Activated CD4-positive, alpha-beta T cell treated with anti-CD3 and anti-CD28 coated beads for 36 hours (primary cell): ENCODE measurements at regions of chr12 and their contacts with region 1.

Region 1: GRCh38 chr12:110449799-110450497 is at the start of gene ARPC3:
- DNase-seq: peak; percentile 98
- ATAC-seq: peak; percentile 99
- H3K4me3 Mint-ChIP-seq: peak within 1 kb of the TSS; percentile 97
- H3K27ac Mint-ChIP-seq: peak within 1 kb of the TSS; percentile 100
- H3K4me1 Mint-ChIP-seq: peaks cover 38% of the 10 kb centered on the region
- H3K27me3 Mint-ChIP-seq: no peaks in the 10 kb centered on the region
- total RNA-seq, gene ARPC3: 244 to 422 TPM

Region 2: DNA sequence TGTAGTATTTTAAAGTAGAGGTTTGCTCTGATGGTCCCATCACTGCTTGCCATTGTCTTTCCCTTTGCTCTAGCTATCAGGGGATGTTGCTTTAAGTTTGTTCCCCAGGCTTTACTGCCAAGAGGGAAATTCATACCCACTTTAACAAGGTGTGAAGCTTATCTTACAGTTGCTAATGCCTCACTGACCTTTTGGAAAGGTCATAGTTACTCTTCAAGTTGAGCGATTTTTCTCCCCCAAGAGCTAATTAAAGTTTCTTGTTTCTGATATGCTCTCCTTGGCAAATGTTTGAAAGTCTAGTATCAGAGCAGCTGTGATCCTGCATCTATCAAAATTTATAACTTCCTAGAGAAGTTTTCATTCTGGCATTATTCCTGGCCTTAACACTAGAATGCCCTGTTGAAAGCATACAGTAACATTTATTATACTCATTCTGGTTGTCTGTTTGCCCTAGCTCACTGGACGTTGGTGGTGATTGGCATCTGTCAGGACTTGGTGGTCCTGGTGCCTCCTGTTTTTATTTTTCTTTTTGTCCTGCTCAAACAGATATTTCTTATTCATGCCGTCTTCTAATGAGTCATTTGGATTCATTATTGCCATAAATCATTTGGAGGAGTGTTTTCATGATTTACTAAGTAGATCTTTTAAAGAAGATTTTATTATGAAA is 160.8 kb before region 1 on chr12:
- CTCF ChIA-PET with region 1: no interaction called
- POLR2A ChIA-PET with region 1: interaction called, 10 read pairs
- intact Hi-C with region 1: no loop called
- DNase-seq: no peak
- ATAC-seq: no peak
- H3K4me3 Mint-ChIP-seq: no peak overlapping the region
- H3K27ac Mint-ChIP-seq: no peak overlapping the region
- H3K4me1 Mint-ChIP-seq: peaks cover 57% of the 10 kb centered on the region
- H3K27me3 Mint-ChIP-seq: no peaks in the 10 kb centered on the region

Region 3: GRCh38 chr12:110403146-110403975 is 46.6 kb before region 1 on chr12 and contains the start of gene ANAPC7:
- CTCF ChIA-PET with region 1: no interaction called
- POLR2A ChIA-PET with region 1: interaction called, 12 read pairs
- intact Hi-C with region 1: loop called (anchors 1 to 5 kb)
- DNase-seq: peak; percentile 93
- ATAC-seq: peak; percentile 94
- H3K4me3 Mint-ChIP-seq: peak within 1 kb of the TSS; percentile 88
- H3K27ac Mint-ChIP-seq: peak within 1 kb of the TSS; percentile 99
- H3K4me1 Mint-ChIP-seq: peaks cover 21% of the 10 kb centered on the region
- H3K27me3 Mint-ChIP-seq: no peaks in the 10 kb centered on the region
- total RNA-seq, gene ANAPC7: 52.6 to 63.6 TPM

Region 4: GRCh38 chr12:110508071-110508586 is 58.2 kb after region 1 on chr12:
- CTCF ChIA-PET with region 1: interaction called, 8 read pairs
- POLR2A ChIA-PET with region 1: no interaction called
- intact Hi-C with region 1: loop called in 1 of 2 experiments (anchors 1 kb)
- DNase-seq: no peak
- ATAC-seq: no peak
- H3K4me3 Mint-ChIP-seq: no peak overlapping the region
- H3K27ac Mint-ChIP-seq: no peak overlapping the region
- H3K4me1 Mint-ChIP-seq: no peaks in the 10 kb centered on the region
- H3K27me3 Mint-ChIP-seq: no peaks in the 10 kb centered on the region

Region 5: DNA sequence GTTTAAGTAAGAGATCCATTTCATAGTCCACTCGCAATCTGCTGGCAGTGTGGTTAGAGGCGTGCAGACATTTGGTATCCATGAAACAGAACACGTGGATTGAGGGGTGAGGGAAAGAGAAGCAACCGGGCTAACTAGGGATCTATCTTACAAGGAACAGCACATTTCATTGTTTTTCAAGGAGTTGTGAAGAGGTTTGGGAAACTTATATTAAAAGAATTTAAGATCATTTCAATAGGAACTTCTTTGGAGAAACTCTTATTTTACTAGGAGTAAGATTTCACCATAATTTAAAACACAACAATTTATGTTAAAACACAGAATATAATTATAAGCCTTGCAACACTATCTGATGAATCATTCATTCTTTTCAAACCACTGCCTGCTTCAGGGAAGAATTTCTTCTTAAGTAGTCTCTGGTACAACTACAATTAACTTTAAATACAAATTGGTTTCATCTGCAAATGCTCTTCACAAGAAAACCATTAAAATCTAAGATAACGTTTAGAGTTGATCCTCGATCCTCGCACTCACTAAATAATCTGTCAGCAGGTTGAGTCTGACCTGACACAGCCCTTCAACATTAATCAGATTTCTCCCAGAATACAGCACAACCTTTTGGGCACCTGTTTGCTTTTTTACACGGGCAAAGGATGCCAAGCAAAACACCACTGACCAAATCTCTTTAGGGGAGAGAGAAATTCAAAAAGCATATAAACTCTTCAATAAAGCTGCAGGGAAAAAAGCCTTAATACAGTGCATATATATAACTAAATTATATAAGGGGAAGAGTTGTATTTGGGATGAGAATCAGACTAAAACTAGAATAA is 105.8 kb after region 1 on chr12:
- CTCF ChIA-PET with region 1: interaction called, 4 read pairs
- POLR2A ChIA-PET with region 1: no interaction called
- intact Hi-C with region 1: loop called in 1 of 2 experiments (anchors 2 kb)
- DNase-seq: no peak
- ATAC-seq: no peak
- H3K4me3 Mint-ChIP-seq: no peak overlapping the region
- H3K27ac Mint-ChIP-seq: peak overlapping the region; percentile 29
- H3K4me1 Mint-ChIP-seq: peaks cover 56% of the 10 kb centered on the region
- H3K27me3 Mint-ChIP-seq: no peaks in the 10 kb centered on the region

Region 6: GRCh38 chr12:110613771-110614684 is 164.1 kb after region 1 on chr12 and contains the start of gene TCTN1:
- CTCF ChIA-PET with region 1: interaction called, 16 read pairs
- POLR2A ChIA-PET with region 1: no interaction called
- intact Hi-C with region 1: loop called in 1 of 2 experiments (anchors 1 kb)
- DNase-seq: peak; percentile 99
- ATAC-seq: peak; percentile 99
- H3K4me3 Mint-ChIP-seq: peak within 1 kb of the TSS; percentile 78
- H3K27ac Mint-ChIP-seq: peak within 1 kb of the TSS; percentile 67
- H3K4me1 Mint-ChIP-seq: peaks cover 12% of the 10 kb centered on the region
- H3K27me3 Mint-ChIP-seq: no peaks in the 10 kb centered on the region
- total RNA-seq, gene TCTN1: 7.2 to 7.3 TPM

Region 7: DNA sequence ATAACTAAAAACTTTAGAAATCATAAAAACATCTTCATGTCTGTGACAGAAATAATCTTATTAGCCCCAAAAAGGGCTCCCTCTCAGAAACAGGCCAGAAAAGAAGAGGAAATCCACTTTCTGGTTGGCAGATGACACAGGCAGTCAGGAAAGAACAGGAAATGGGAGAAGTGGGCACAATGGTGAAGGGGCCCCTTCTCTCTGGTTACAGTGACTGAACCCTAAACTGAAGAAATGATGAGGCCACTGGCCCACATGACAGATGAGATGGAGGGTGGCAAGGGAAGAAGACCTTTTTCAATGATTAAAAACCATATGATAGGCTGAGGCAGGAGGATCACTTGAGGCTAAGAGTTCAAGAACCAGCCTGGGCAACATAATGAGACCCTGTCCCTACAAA is 185.1 kb after region 1 on chr12:
- CTCF ChIA-PET with region 1: no interaction called
- POLR2A ChIA-PET with region 1: no interaction called
- intact Hi-C with region 1: no loop called
- DNase-seq: no peak
- ATAC-seq: peak; percentile 39
- H3K4me3 Mint-ChIP-seq: no peak overlapping the region
- H3K27ac Mint-ChIP-seq: no peak overlapping the region
- H3K4me1 Mint-ChIP-seq: peaks cover 19% of the 10 kb centered on the region
- H3K27me3 Mint-ChIP-seq: no peaks in the 10 kb centered on the region

Region 8: DNA sequence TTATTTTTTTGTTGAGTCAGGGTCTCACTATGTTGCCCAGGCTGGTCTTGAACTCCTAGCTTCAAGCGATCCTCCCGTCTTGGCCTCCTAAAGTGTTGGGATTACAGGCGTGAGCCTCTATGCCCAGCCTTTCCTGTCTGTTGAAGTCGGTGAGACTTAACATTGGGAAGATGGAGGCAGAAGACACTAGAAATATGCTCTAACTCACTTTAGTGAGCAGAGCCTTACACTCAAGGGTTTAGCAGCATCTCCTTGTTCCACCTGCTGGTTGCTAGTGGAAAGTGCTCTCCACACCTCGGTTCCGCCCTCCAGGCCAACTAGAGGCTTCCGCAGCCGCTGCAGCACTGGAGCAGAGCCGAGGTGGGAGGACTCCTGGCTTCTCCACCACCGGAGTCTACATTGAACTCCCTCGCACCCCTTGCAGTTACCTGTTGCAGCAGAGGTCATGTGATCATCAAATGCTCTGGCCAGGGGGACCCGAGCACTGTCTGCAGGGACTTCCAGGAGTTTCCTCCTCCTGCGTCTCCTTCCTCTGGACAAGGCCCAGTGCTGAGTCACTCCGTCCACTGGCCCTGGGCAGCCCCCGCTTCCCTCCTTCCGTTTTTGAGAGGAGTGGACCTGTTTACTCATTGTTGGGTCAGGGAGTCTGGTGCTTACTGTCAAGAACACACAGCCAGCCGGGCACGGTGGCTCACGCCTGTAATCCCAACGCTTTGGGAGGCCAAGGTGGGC is 248.4 kb after region 1 on chr12:
- CTCF ChIA-PET with region 1: no interaction called
- POLR2A ChIA-PET with region 1: no interaction called
- intact Hi-C with region 1: loop called (anchors 1 kb)
- DNase-seq: peak; percentile 89
- ATAC-seq: peak; percentile 100
- H3K4me3 Mint-ChIP-seq: no peak overlapping the region
- H3K27ac Mint-ChIP-seq: peak overlapping the region; percentile 76
- H3K4me1 Mint-ChIP-seq: peaks cover 13% of the 10 kb centered on the region
- H3K27me3 Mint-ChIP-seq: no peaks in the 10 kb centered on the region

Region 9: DNA sequence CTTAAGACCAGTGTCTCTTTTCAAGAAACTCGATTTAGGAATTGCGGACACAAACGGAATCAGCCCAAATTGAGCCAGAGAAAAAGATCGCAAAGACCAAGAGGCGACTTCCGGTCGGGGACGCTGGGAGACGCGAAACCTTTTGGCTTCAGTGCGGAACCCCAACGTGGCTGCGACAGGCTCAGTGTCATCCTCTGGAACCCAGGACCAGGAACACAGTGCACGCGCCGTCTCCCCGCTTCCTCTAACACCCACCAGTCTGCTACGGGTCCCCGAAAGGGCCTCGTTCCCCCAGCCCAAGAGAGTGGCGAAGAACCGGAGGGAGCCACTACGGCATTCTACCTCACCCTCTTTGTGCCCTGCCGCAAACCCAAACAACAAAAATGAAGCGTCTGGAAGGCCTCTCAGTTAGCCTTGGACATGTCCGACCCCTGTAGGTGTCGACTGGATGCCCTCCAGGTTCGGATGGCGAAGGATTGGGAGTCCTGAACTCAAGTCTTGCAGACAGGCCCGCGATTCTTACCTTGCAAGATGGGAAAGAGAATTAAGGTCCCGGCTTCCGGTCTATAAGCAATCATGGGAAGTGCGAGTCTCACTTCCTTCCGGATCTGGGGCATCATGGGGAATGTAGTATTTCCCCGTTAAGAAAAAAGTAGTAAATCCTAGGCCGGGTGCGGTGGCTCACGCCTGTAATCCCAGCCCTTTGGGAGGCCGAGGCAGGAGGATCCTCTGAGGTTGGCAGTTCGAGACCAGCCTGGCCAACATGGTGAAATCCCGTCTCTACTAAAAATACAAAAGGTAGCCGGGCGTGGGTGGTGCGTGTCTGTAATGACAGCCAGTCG is 1959.3 kb after region 1 on chr12 and contains the start of gene RPL6:
- CTCF ChIA-PET with region 1: no interaction called
- POLR2A ChIA-PET with region 1: no interaction called
- intact Hi-C with region 1: no loop called
- DNase-seq: peak; percentile 86
- ATAC-seq: peak; percentile 92
- H3K4me3 Mint-ChIP-seq: peak within 1 kb of the TSS; percentile 93
- H3K27ac Mint-ChIP-seq: peak within 1 kb of the TSS; percentile 100
- H3K4me1 Mint-ChIP-seq: peaks cover 42% of the 10 kb centered on the region
- H3K27me3 Mint-ChIP-seq: no peaks in the 10 kb centered on the region
- total RNA-seq, gene RPL6: 2,097 to 2,202 TPM